Breast epithelium (tissue), 4 donors: ENCODE measurements at regions of chr4 and their contacts with region 1.

Region 1: GRCh38 chr4:63717384-63717783 is 691.9 kb downstream of the TECRL start:
- DNase-seq: no peak
- H3K4me3 ChIP-seq: no peak overlapping the region
- H3K27ac ChIP-seq: no peak overlapping the region
- H3K4me1 ChIP-seq: no peaks in the 10 kb centered on the region
- H3K27me3 ChIP-seq: no peaks in the 10 kb centered on the region
- CTCF ChIP-seq: no peak
- POLR2A ChIP-seq: no peak

Region 2: DNA sequence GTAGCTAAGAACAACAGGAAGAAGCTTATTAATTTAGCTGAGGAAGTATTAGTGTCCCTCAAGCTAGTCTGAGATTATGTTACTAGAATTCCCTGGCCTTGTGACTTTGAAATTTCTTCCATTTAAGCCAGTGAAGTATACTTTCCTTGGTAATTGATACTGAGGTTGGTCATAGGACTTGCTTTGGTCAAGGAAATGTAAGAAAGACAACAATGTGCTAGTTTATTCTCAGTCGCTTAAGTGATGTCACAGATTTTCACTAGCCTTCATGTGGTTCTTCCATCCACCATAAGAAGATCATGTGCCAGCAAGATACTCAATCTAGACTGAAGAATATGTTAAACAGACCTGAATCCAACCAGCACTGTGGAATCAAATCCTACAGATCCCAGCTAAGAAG is 448.2 kb before region 1 on chr4:
- intact Hi-C with region 1: loop called (anchors 5 kb)
- DNase-seq: no peak
- H3K4me3 ChIP-seq: no peak overlapping the region
- H3K27ac ChIP-seq: no peak overlapping the region
- H3K4me1 ChIP-seq: no peaks in the 10 kb centered on the region
- H3K27me3 ChIP-seq: no peaks in the 10 kb centered on the region
- CTCF ChIP-seq: no peak
- POLR2A ChIP-seq: no peak

Region 3: DNA sequence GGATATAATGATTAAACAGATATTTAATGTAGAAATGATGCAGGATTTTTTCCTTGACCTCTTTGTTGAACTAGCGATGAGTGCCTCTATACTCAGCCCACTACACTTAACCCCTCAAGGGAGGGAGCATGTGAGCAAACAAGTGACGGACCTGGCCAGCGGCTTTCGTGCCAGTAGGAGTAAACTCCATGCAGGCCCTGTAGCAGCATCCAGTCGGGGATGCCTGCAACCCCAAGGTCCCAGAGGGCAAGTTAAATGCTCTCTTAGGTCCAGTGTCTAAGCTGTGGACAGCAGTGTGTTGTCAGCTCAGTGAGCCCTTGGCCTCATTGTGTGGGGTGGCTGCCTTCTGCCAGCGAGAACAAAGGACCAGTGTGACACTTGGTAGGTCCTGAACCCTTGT is 16.8 kb before region 1 on chr4:
- intact Hi-C with region 1: no loop called
- DNase-seq: no peak
- H3K4me3 ChIP-seq: no peak overlapping the region
- H3K27ac ChIP-seq: no peak overlapping the region
- H3K4me1 ChIP-seq: no peaks in the 10 kb centered on the region
- H3K27me3 ChIP-seq: no peaks in the 10 kb centered on the region
- CTCF ChIP-seq: no peak
- POLR2A ChIP-seq: no peak

Region 4: DNA sequence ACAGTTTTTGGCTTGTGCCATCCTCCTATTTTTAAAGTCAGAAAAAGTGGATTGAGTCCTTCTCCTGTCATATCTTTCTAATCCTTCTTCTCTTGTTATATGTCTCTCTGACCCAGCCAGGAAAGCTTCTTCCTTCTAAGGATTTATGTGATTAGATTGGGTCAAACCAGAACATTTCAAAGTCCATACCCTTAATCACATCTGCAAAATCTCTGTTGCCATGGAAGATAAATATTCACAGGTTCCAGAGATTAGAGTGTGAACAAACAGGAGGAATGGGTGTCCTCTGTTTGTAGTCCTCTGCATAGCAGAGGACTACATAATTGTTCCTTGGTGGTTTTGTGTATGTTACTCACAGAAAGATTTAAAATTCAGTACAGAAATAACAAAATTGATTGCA is 1531.7 kb after region 1 on chr4:
- intact Hi-C with region 1: no loop called
- DNase-seq: no peak
- H3K4me3 ChIP-seq: no peak overlapping the region
- H3K27ac ChIP-seq: no peak overlapping the region
- H3K4me1 ChIP-seq: no peaks in the 10 kb centered on the region
- H3K27me3 ChIP-seq: no peaks in the 10 kb centered on the region
- CTCF ChIP-seq: no peak
- POLR2A ChIP-seq: no peak